ENCODE measurements at regions of chr19 and their contacts with region 1.

Region 1: GRCh38 chr19:51473009-51473707 is 5.2 kb upstream of the CEACAM18 start:
- DNase-seq: peak; percentile 39 to 83 (median 59)
- ATAC-seq: peak; percentile 85
- H3K4me3 ChIP-seq: no peak overlapping the region
- H3K4me3 Mint-ChIP-seq: no peak overlapping the region
- H3K27ac ChIP-seq: no peak overlapping the region
- H3K27ac Mint-ChIP-seq: no peak overlapping the region
- H3K4me1 ChIP-seq: no peaks in the 10 kb centered on the region
- H3K4me1 Mint-ChIP-seq: peaks cover 0 to 7% (median 0%) of the 10 kb centered on the region in 7 donors
- H3K27me3 ChIP-seq: no peaks in the 10 kb centered on the region
- H3K27me3 Mint-ChIP-seq: peaks cover 17 to 27% (median 20%) of the 10 kb centered on the region in 5 donors

Region 2: DNA sequence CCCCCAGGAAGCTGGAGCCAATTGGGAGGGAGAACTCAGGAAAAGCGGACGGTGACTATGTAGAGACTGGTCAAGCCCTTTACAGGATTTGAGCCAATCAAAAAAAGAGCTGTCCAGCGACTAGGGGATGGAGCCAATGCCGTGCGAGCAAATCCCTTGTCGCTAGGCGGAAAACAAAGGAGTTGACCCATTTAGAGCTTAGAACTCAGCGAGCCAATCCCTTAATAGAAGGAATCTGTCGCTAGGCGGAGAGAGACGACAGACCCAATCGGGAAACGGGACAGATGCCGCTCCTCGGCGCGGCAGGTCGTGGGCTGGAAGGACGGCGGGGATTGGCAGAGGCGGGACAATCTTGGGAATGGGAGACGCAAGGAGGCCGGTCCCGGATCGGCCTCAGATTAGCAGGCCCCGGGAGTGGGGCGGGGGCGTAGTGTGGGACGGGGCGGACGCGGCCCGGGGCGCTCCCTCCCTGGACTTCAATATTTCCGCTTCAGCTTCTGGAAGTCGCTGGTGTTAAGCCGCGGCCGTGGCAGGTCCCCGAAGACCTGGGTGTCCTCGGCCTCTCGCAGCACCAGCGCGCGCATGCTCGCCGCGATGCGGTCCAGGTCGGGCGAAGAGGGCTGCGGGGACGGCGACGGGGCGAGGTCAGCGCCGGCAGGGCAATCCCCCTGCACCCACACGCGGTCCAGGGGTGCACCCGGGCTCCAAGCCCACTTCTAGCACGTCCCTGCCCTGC is 1603.5 kb before region 1 on chr19:
- CTCF ChIA-PET with region 1: no interaction called
- POLR2A ChIA-PET with region 1: no interaction called
- intact Hi-C with region 1: no loop called
- DNase-seq: peak; percentile 83 to 94 (median 87)
- ATAC-seq: peak; percentile 87
- H3K4me3 ChIP-seq: peak overlapping the region; percentile 58
- H3K4me3 Mint-ChIP-seq: peak overlapping the region in 2 of 10 donors; percentile 87
- H3K27ac ChIP-seq: peak overlapping the region; percentile 72
- H3K27ac Mint-ChIP-seq: peak overlapping the region in 5 of 9 donors; percentile 59 to 87 (median 74)
- H3K4me1 ChIP-seq: peaks cover 31 to 38% of the 10 kb centered on the region in 2 donors
- H3K4me1 Mint-ChIP-seq: peaks cover 25 to 51% (median 45%) of the 10 kb centered on the region in 7 donors
- H3K27me3 ChIP-seq: no peaks in the 10 kb centered on the region
- H3K27me3 Mint-ChIP-seq: no peaks in the 10 kb centered on the region

Region 3: GRCh38 chr19:51422053-51422448 is 51.1 kb before region 1 on chr19:
- CTCF ChIA-PET with region 1: interaction called, 5 read pairs
- POLR2A ChIA-PET with region 1: no interaction called
- intact Hi-C with region 1: loop called in 1 of 2 experiments (anchors 1 kb)
- DNase-seq: peak; percentile 41 to 96 (median 61)
- ATAC-seq: peak; percentile 90
- H3K4me3 ChIP-seq: no peak overlapping the region
- H3K4me3 Mint-ChIP-seq: peak overlapping the region in 3 of 10 donors; percentile 4 to 12 (median 8)
- H3K27ac ChIP-seq: no peak overlapping the region
- H3K27ac Mint-ChIP-seq: peak overlapping the region in 1 of 9 donors; percentile 2
- H3K4me1 ChIP-seq: no peaks in the 10 kb centered on the region
- H3K4me1 Mint-ChIP-seq: peaks cover 0 to 11% (median 0%) of the 10 kb centered on the region in 7 donors
- H3K27me3 ChIP-seq: no peaks in the 10 kb centered on the region
- H3K27me3 Mint-ChIP-seq: peaks cover 19 to 40% (median 31%) of the 10 kb centered on the region in 5 donors

Region 4: DNA sequence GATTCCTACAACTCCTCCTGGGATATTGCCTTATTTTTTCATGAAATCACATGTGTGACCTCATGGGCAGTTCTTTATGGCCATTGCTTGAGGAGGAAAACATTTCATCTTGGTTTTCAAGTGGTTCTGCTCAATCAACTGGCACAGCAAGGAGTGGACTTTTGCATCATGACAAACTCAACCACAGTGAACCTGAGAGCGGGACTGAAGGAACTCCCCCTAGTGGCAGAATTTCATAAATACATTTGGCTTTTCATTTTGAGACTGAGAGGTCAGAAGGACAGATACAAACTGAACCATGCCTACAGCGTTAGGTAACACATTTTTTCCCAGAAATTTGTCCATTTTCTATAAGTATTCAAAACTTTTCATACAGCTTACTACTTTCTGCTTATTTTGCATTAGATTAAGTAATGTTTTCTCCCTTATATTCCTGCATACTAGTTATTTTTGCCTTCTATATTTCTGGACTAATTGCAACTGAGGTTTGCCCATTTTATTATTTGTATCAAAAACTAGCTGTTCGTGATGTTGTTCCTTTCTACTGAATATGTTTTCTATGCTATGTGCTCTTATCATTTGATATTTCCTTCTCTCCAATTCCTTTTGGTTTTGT is 41.8 kb after region 1 on chr19:
- CTCF ChIA-PET with region 1: no interaction called
- POLR2A ChIA-PET with region 1: no interaction called
- intact Hi-C with region 1: loop called (anchors 1 kb)
- DNase-seq: peak in 6 of 9 donors; percentile 2 to 48 (median 36)
- ATAC-seq: no peak
- H3K4me3 ChIP-seq: no peak overlapping the region
- H3K4me3 Mint-ChIP-seq: no peak overlapping the region
- H3K27ac ChIP-seq: no peak overlapping the region
- H3K27ac Mint-ChIP-seq: peak overlapping the region in 1 of 9 donors; percentile 27
- H3K4me1 ChIP-seq: no peaks in the 10 kb centered on the region
- H3K4me1 Mint-ChIP-seq: peaks cover 0 to under 1% (median 0%) of the 10 kb centered on the region in 7 donors
- H3K27me3 ChIP-seq: no peaks in the 10 kb centered on the region
- H3K27me3 Mint-ChIP-seq: peaks cover 28 to 60% (median 35%) of the 10 kb centered on the region in 5 donors

Region 5: DNA sequence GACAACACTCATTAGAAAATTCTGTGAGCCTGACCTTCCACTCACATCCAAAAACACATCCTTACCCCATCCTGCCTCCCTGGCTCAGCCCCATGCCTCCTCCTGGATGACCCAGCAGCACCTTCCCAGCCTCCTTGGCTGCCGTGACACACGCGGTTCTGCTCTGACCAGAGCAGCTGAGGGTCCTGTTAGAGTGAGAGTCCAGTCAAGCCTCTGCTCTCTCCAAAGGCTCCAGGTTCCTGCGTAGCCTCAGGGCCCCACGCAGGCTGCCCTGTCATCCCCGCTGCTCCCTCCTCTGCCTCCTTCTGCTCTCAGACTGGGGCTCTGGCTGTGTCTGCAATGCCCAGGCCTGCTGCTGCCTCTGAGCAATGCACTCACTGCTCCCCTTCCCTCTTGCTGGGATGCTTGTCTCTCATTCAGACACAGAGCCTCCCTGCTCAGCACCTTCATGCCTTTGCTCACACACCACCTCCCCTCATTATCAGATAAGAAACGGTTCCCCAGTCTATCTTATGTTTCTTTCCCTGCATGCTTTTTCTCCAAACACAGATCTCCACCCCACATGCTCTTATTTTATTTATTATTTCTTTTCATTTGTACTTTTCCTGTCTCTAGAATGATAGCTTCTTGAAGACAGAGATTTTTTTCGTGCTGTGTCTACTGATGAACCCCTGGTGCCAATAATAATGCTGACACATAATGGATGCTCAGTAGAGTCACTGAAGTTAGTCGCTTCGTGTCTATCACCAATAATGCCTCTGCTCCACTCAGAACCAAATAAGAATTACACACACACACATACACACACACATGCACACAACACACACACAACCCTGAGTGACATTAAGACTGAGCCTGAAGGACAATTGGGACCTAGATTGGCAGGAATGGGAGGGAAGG is 68.5 kb after region 1 on chr19:
- CTCF ChIA-PET with region 1: no interaction called
- POLR2A ChIA-PET with region 1: no interaction called
- intact Hi-C with region 1: no loop called
- DNase-seq: no peak
- ATAC-seq: no peak
- H3K4me3 ChIP-seq: no peak overlapping the region
- H3K4me3 Mint-ChIP-seq: no peak overlapping the region
- H3K27ac ChIP-seq: no peak overlapping the region
- H3K27ac Mint-ChIP-seq: no peak overlapping the region
- H3K4me1 ChIP-seq: no peaks in the 10 kb centered on the region
- H3K4me1 Mint-ChIP-seq: peaks cover 0 to 5% (median 0%) of the 10 kb centered on the region in 7 donors
- H3K27me3 ChIP-seq: no peaks in the 10 kb centered on the region
- H3K27me3 Mint-ChIP-seq: peaks cover 32 to 68% (median 60%) of the 10 kb centered on the region in 5 donors

Region 6: DNA sequence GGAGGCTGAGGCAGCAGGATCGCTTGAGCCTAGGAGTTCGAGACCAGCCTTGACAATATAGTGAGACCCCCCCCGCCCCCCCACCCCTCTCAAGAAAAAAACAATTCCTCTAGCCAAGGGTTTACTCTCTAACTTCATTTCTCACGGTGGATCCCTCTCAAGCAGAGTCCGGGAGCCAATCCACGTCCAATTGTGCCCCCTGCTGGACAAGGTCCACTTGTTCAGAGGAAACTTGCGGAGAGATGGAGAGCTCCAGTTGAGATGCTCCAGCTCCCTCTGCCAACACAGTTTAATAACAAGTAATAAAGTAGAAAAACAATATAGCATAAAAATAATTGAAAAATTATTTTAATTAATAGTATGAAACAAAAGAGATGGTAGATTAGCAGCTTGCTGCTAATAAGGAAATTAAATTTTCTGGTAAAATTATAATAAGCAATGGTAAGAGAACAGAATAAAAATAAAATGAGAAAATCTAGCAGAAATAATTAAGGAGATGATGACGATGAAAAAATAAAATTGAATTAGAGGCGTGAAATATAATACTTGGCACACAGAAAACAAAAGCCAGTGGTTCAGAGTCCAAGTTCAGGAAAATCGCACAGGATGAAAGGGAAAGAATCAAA is 187.9 kb after region 1 on chr19:
- CTCF ChIA-PET with region 1: interaction called, 24 read pairs
- POLR2A ChIA-PET with region 1: no interaction called
- intact Hi-C with region 1: loop called in 1 of 2 experiments (anchors 1 kb)
- DNase-seq: peak in 8 of 9 donors; percentile 7 to 52 (median 29)
- ATAC-seq: peak; percentile 60
- H3K4me3 ChIP-seq: no peak overlapping the region
- H3K4me3 Mint-ChIP-seq: no peak overlapping the region
- H3K27ac ChIP-seq: no peak overlapping the region
- H3K27ac Mint-ChIP-seq: no peak overlapping the region
- H3K4me1 ChIP-seq: no peaks in the 10 kb centered on the region
- H3K4me1 Mint-ChIP-seq: peaks cover 4 to 8% (median 7%) of the 10 kb centered on the region in 7 donors
- H3K27me3 ChIP-seq: peaks cover 0 to 6% of the 10 kb centered on the region in 2 donors
- H3K27me3 Mint-ChIP-seq: peaks cover 17 to 34% (median 28%) of the 10 kb centered on the region in 5 donors

Measured in naive thymus-derived CD4-positive, alpha-beta T cell (primary cell).